Vagina (tissue), 2 donors: ENCODE measurements at regions of chr2 and their contacts with region 1.

Region 1: DNA sequence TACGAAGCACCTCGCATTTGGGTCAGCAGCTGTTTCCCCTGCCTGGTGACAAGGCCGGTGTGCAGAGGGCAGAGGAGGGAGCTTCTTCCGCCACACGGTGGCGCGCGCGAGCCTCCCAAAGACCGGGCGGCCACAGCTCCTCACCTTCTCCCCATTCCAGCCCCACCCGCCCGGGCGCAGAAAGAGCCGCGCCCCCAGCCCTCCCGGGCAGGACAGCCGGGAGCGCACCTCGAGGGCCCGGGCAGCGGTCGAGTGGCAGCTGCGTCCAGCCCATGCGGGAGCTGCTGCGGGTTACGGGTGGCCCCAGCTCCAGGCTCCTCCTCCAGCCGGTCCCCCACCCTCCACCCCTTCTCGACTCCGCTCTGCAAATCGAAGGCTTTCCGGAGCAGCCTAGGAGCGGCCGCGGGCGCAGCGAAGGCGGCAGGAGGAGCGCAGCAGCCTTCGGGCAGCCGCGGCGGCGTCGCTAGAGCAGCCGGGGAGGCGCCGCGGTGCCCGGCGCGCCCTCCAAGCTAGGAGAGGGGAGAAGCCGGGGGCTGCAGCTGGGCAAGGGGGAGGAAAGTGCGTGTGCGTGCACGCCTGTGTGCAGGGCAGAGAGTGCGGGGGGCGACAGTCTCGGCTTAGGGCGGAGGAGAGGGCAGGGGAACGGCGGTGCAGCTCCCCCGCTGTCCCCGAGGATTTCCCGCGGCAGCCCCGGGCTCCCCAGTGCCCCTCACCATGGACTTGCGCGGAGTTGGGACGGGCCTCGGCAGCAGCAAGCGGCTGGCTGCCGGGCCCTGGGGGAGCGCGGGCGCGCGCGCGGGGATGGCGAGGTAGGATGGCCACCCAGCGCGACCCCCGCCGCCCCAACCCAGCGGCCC is at the start of gene CCDC85A:
- DNase-seq: peak in 1 of 2 donors; percentile 84
- H3K4me3 ChIP-seq: peak within 1 kb of the TSS; percentile 50 to 70
- H3K27ac ChIP-seq: peak within 1 kb of the TSS; percentile 11
- H3K4me1 ChIP-seq: peaks cover 25% of the 10 kb centered on the region
- H3K27me3 ChIP-seq: no peaks in the 10 kb centered on the region
- CTCF ChIP-seq: peak; percentile 59 to 93 (median 70)
- POLR2A ChIP-seq: no peak
- total RNA-seq, gene CCDC85A: 4.7 TPM

Region 2: DNA sequence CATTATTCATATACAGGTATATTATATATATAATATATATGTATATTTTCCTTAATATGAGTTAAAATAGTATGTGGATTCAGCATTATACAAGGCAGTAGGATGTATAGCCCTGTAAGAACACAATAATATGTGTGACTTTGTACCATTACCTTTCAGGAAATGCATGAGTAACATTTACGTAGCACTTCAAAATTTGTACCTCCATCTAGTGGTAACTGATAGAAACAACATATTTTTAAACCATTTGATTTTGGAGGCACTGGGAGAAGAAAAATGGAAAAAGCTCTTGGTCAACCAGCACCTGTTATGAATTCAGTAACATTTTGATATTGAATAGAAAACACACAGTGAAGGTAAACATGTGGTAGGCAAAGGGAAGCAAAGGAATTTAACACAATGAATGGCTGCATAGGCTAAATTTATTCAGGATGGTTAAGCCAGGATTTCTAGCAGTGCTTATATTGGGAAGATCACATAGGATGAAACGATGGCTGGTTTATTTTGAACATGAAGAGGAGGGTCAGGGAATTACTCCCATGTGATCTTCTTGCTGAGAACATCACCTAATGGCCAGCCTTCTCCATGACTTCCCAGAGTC is 565.4 kb after region 1 on chr2:
- intact Hi-C with region 1: loop called (anchors 10 kb)
- DNase-seq: no peak
- H3K4me3 ChIP-seq: no peak overlapping the region
- H3K27ac ChIP-seq: no peak overlapping the region
- H3K4me1 ChIP-seq: no peaks in the 10 kb centered on the region
- H3K27me3 ChIP-seq: no peaks in the 10 kb centered on the region
- CTCF ChIP-seq: no peak
- POLR2A ChIP-seq: no peak